PC-3 (cell line): ENCODE measurements at regions of chr5 and their contacts with region 1.

Region 1: DNA sequence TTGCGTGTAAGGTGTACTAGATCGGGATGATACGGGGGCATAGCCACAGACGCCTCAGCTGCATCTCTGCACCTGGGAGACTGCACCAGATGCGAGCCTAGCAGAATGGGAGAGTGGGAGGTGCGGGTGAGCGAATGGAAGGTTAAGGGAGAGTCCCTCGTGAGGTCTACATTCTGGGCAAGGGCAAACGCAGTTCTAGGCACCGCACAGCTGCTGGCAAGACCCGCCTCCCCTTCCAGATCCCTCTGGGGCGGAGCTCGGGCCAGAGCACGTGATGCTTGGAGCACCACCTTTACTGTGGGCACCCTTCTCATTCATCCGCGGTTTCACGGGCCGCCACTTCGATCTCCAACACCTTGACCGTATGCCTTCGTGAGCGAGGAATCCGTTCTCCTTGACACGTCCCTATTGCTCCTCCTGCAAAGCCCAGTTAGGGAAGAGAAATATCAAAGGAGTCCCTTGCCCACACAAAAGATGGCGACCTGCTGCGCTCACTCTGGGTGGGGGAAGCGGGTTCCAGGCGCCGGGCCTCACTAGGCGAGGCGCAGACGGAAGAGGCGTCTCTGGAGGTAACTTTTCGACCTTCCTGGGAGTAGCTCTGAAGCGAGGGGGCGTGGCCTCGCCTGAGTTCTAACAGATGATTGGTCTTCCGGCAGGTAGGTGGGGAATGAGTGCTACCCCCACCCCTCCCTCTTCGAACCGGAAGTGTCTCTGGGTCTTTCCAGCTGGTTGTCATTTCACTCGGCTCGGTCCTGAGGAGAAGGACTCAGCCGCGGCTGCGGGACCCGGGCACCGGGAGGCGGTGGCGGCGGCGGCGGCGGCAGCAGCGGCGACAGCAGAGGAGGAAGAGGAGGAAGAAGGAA is at the start of gene CPEB4:
- DNase-seq: peak; percentile 100
- ATAC-seq: peak; percentile 93
- H3K4me3 ChIP-seq: peak within 1 kb of the TSS; percentile 90
- H3K27ac ChIP-seq: peak within 1 kb of the TSS; percentile 73
- H3K4me1 ChIP-seq: peaks cover 35% of the 10 kb centered on the region
- H3K27me3 ChIP-seq: no peaks in the 10 kb centered on the region
- CTCF ChIP-seq: no peak
- total RNA-seq, gene CPEB4: 26.2 and 37.0 TPM in 2 replicates

Region 2: GRCh38 chr5:173615884-173616576 is 271.8 kb before region 1 on chr5:
- CTCF ChIA-PET with region 1: interaction called, 5 read pairs
- POLR2A ChIA-PET with region 1: no interaction called
- intact Hi-C with region 1: loop called (anchors 1 kb)
- DNase-seq: peak; percentile 79
- ATAC-seq: peak; percentile 62
- H3K4me3 ChIP-seq: peak overlapping the region; percentile 90
- H3K27ac ChIP-seq: peak overlapping the region; percentile 71
- H3K4me1 ChIP-seq: peaks cover 36% of the 10 kb centered on the region
- H3K27me3 ChIP-seq: no peaks in the 10 kb centered on the region
- CTCF ChIP-seq: peak; percentile 81

Region 3: DNA sequence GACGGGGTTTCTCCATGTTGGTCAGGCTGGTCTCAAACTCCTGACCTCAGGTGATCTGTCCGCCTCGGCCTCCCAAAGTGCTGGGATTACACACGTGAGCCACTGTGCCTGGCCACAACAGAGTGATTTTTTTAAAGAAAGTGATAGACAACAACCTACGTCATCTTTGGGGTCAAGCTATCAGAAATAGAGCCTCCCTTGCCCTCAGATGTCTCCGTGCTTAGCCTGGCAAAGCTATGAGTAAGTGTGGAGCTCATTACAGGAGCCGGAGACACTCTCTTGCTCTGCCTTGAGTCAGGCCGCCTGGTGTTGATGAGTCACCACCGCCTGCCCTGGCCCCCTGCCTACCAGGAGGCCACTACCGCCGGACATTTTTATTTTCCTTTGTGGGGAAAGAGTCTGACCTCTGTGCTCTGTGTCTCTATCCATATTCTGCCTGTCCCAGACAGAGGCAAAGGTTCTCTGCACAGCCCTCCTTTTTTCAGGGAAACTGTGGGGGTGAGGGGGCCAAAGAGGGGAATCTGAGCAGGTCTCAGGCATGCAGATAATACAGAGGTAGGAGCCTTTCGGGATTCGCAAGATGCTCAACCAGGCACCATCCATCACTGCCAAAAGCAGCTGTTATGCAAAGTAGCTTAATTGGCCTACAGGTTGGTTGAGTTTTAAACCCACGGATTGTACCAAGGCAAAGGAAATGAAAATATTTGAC is 123.4 kb before region 1 on chr5:
- CTCF ChIA-PET with region 1: interaction called, 3 read pairs
- POLR2A ChIA-PET with region 1: interaction called, 6 read pairs
- intact Hi-C with region 1: loop called (anchors 1 kb)
- DNase-seq: peak; percentile 95
- ATAC-seq: peak; percentile 93
- H3K4me3 ChIP-seq: no peak overlapping the region
- H3K27ac ChIP-seq: peak overlapping the region; percentile 79
- H3K4me1 ChIP-seq: peaks cover 22% of the 10 kb centered on the region
- H3K27me3 ChIP-seq: no peaks in the 10 kb centered on the region
- CTCF ChIP-seq: no peak

Region 4: GRCh38 chr5:173907686-173908371 is 20.0 kb after region 1 on chr5:
- CTCF ChIA-PET with region 1: interaction called, 3 read pairs
- POLR2A ChIA-PET with region 1: interaction called, 7 read pairs
- intact Hi-C with region 1: loop called (anchors 2 kb)
- DNase-seq: peak; percentile 46
- ATAC-seq: peak; percentile 59
- H3K4me3 ChIP-seq: no peak overlapping the region
- H3K27ac ChIP-seq: no peak overlapping the region
- H3K4me1 ChIP-seq: peaks cover 17% of the 10 kb centered on the region
- H3K27me3 ChIP-seq: no peaks in the 10 kb centered on the region
- CTCF ChIP-seq: no peak

Region 5: GRCh38 chr5:173941758-173942401 is 54.0 kb after region 1 on chr5:
- CTCF ChIA-PET with region 1: no interaction called
- POLR2A ChIA-PET with region 1: interaction called, 16 read pairs
- intact Hi-C with region 1: no loop called
- DNase-seq: peak; percentile 64
- ATAC-seq: peak; percentile 82
- H3K4me3 ChIP-seq: peak overlapping the region; percentile 28; the same call in 1 of the 2 replicates
- H3K27ac ChIP-seq: peak overlapping the region; percentile 56
- H3K4me1 ChIP-seq: peaks cover 43% of the 10 kb centered on the region
- H3K27me3 ChIP-seq: no peaks in the 10 kb centered on the region
- CTCF ChIP-seq: no peak

Region 6: GRCh38 chr5:173972925-173973615 is 85.2 kb after region 1 on chr5:
- CTCF ChIA-PET with region 1: interaction called, 8 read pairs
- POLR2A ChIA-PET with region 1: interaction called, 4 read pairs
- intact Hi-C with region 1: loop called (anchors 1 kb)
- DNase-seq: peak; percentile 95
- ATAC-seq: peak; percentile 44
- H3K4me3 ChIP-seq: peak overlapping the region; percentile 68
- H3K27ac ChIP-seq: peak overlapping the region; percentile 7; the same call in 1 of the 2 replicates
- H3K4me1 ChIP-seq: peaks cover 36% of the 10 kb centered on the region
- H3K27me3 ChIP-seq: no peaks in the 10 kb centered on the region
- CTCF ChIP-seq: peak; percentile 92